Aorta (tissue), 5 donors: ENCODE measurements at regions of chr9 and their contacts with region 1.

Region 1: GRCh38 chr9:88593537-88594185 is 58.7 kb downstream of the NXNL2 start:
- DNase-seq: no peak
- ATAC-seq: peak; percentile 84
- H3K4me3 ChIP-seq: no peak overlapping the region
- H3K27ac ChIP-seq: no peak overlapping the region
- H3K4me1 ChIP-seq: no peaks in the 10 kb centered on the region
- H3K27me3 ChIP-seq: no peaks in the 10 kb centered on the region

Region 2: GRCh38 chr9:88399966-88400365 is 193.7 kb before region 1 on chr9:
- intact Hi-C with region 1: no loop called
- DNase-seq: no peak
- ATAC-seq: no peak
- H3K4me3 ChIP-seq: no peak overlapping the region
- H3K27ac ChIP-seq: no peak overlapping the region
- H3K4me1 ChIP-seq: peaks cover 0 to 4% of the 10 kb centered on the region in 2 donors
- H3K27me3 ChIP-seq: no peaks in the 10 kb centered on the region

Region 3: GRCh38 chr9:88645172-88645878 is 51.7 kb after region 1 on chr9:
- intact Hi-C with region 1: no loop called
- DNase-seq: no peak
- ATAC-seq: no peak
- H3K4me3 ChIP-seq: no peak overlapping the region
- H3K27ac ChIP-seq: no peak overlapping the region
- H3K4me1 ChIP-seq: no peaks in the 10 kb centered on the region
- H3K27me3 ChIP-seq: no peaks in the 10 kb centered on the region

Region 4: DNA sequence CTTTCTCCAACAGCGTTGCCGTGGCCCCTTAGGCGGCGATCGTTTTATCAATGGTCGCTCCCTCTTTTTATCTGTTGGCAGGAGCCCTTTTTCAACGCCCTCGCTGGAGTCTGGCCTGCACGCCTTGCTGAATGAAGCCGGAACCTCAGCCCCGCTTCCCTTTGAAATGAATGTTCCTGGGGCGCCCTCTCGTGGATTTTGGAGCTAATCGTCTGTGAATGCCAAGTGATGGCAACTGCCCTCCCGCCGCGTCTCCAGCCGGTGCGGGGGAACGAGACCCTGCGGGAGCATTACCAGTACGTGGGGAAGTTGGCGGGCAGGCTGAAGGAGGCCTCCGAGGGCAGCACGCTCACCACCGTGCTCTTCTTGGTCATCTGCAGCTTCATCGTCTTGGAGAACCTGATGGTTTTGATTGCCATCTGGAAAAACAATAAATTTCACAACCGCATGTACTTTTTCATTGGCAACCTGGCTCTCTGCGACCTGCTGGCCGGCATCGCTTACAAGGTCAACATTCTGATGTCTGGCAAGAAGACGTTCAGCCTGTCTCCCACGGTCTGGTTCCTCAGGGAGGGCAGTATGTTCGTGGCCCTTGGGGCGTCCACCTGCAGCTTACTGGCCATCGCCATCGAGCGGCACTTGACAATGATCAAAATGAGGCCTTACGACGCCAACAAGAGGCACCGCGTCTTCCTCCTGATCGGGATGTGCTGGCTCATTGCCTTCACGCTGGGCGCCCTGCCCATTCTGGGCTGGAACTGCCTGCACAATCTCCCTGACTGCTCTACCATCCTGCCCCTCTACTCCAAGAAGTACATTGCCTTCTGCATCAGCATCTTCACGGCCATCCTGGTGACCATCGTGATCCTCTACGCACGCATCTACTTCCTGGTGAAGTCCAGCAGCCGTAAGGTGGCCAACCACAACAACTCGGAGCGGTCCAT is 407.6 kb after region 1 on chr9:
- intact Hi-C with region 1: loop called (anchors 2 kb)
- DNase-seq: peak; percentile 93 to 95
- ATAC-seq: peak; percentile 80
- H3K4me3 ChIP-seq: no peak overlapping the region
- H3K27ac ChIP-seq: peak overlapping the region in 1 of 2 donors; percentile 64
- H3K4me1 ChIP-seq: peaks cover 0 to 3% of the 10 kb centered on the region in 2 donors
- H3K27me3 ChIP-seq: no peaks in the 10 kb centered on the region